ENCODE measurements at regions of chr1 and their contacts with region 1.

Region 1: GRCh38 chr1:27154991-27155781 is at the start of gene SLC9A1:
- DNase-seq: peak; percentile 90
- H3K4me3 Mint-ChIP-seq: peak within 1 kb of the TSS; percentile 92
- H3K27ac Mint-ChIP-seq: peak within 1 kb of the TSS; percentile 94
- H3K4me1 Mint-ChIP-seq: peaks cover 46% of the 10 kb centered on the region
- H3K27me3 Mint-ChIP-seq: no peaks in the 10 kb centered on the region
- CTCF ChIP-seq: peak; percentile 72
- total RNA-seq, gene SLC9A1: 70.5 and 88.8 TPM in 2 replicates

Region 2: GRCh38 chr1:27111626-27112573 is 43.3 kb before region 1 on chr1:
- CTCF ChIA-PET with region 1: interaction called, 14 read pairs
- POLR2A ChIA-PET with region 1: interaction called, 69 read pairs
- intact Hi-C with region 1: loop called (anchors 1 kb)
- DNase-seq: peak; percentile 99
- H3K4me3 Mint-ChIP-seq: peak overlapping the region; percentile 46
- H3K27ac Mint-ChIP-seq: peak overlapping the region; percentile 74
- H3K4me1 Mint-ChIP-seq: peaks cover 31% of the 10 kb centered on the region
- H3K27me3 Mint-ChIP-seq: no peaks in the 10 kb centered on the region
- CTCF ChIP-seq: peak; percentile 20

Region 3: DNA sequence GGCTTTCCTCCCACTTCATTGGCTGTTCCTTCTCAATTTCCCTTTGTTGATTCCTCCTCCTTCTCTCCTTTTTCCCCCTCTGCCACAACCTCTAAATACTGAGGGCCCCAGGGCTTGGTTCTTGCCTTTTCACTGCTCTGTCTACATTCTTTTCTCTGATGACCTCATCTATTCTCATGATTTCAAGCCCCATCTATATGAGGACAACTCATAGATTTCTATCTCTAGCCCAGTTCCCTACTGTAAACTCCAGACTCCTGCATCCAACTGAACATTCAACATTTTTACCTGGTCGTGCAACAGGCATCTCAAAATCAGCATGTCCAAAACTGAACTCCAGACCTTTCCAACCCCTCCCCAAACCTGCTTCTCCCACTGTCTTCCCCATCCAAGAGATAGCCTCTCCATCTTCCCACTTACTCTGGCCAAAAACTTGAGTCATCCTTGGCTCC is 11.2 kb after region 1 on chr1:
- CTCF ChIA-PET with region 1: no interaction called
- POLR2A ChIA-PET with region 1: interaction called, 12 read pairs
- intact Hi-C with region 1: no loop called
- DNase-seq: no peak
- H3K4me3 Mint-ChIP-seq: no peak overlapping the region
- H3K27ac Mint-ChIP-seq: no peak overlapping the region
- H3K4me1 Mint-ChIP-seq: no peaks in the 10 kb centered on the region
- H3K27me3 Mint-ChIP-seq: no peaks in the 10 kb centered on the region
- CTCF ChIP-seq: no peak

Region 4: DNA sequence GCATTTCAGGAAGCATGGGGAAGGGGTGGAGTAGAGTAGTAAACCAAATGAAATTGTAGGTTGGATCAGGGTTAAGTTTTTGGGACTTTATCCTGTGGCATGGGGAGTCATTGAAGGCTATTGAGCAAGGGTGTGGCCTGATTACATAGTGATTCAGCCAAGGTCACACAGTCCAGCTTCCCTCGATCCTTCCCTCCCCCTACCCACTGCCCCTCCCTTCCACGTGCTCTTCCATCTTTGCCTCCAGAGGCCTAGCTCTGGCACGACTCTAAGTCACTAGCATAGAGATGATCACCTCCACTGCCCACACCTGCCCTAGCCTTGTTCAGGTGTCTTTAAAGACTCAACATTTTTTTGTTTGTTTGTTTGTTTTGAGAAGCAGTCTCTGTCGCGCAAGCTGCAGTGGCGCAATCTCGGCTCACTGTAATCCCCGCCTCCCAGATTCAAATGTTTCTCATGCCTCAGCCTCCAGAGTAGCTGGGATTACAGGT is 36.9 kb after region 1 on chr1:
- CTCF ChIA-PET with region 1: interaction called, 5 read pairs
- POLR2A ChIA-PET with region 1: interaction called, 18 read pairs
- intact Hi-C with region 1: loop called (anchors 2 kb)
- DNase-seq: peak; percentile 58
- H3K4me3 Mint-ChIP-seq: peak overlapping the region; percentile 5
- H3K27ac Mint-ChIP-seq: peak overlapping the region; percentile 43
- H3K4me1 Mint-ChIP-seq: peaks cover 15% of the 10 kb centered on the region
- H3K27me3 Mint-ChIP-seq: no peaks in the 10 kb centered on the region
- CTCF ChIP-seq: no peak

Region 5: DNA sequence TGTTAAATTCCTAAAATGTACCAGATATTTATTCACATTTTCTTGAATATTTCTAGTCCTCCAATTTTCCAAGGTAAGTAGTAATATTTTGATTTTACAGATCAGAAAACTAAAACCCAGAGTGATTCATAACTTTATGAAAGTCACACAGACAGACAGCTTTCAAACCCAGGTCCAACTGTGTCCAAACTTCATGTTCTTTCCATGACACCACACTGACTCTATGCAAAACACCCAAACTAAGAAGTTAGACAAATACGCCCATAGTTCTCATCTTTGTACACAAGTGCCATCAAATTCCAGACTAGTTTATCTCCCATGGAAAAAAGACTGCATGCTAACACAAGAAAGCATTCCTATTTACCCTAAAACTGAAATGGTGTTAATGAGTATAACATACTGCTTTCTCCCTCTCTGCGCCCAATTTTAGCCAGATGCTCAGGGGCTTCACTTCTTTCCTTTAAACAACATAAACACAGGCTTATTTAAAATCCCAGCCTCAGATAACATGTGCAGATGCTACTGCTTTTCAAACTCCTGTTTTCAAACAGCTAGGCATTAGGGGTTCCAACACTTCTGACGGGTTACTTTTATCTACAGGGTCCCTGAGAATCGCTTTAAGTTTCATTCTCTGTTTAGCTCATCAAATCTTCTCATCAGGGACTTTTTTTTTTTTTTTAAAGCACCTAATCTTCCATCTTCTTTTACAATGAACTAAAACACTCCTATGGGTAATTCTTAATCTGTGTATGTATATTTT is 290.2 kb after region 1 on chr1:
- CTCF ChIA-PET with region 1: no interaction called
- POLR2A ChIA-PET with region 1: no interaction called
- intact Hi-C with region 1: no loop called
- DNase-seq: no peak
- H3K4me3 Mint-ChIP-seq: no peak overlapping the region
- H3K27ac Mint-ChIP-seq: peak overlapping the region; percentile 29
- H3K4me1 Mint-ChIP-seq: peaks cover 19% of the 10 kb centered on the region
- H3K27me3 Mint-ChIP-seq: no peaks in the 10 kb centered on the region
- CTCF ChIP-seq: no peak

Measured in MCF 10A (cell line).